ENCODE measurements at regions of chr16 and their contacts with region 1.

Region 1: GRCh38 chr16:85610508-85611332 is 2.4 kb upstream of the GSE1 start:
- DNase-seq: peak; percentile 93
- ATAC-seq: peak; percentile 62
- H3K4me3 Mint-ChIP-seq: peak overlapping the region; percentile 69
- H3K27ac Mint-ChIP-seq: peak overlapping the region; percentile 53
- H3K4me1 Mint-ChIP-seq: peaks cover 58% of the 10 kb centered on the region
- H3K27me3 Mint-ChIP-seq: no peaks in the 10 kb centered on the region

Region 2: GRCh38 chr16:85420501-85421337 is 190.0 kb before region 1 on chr16:
- CTCF ChIA-PET with region 1: interaction called, 79 read pairs
- POLR2A ChIA-PET with region 1: no interaction called
- DNase-seq: peak; percentile 79
- ATAC-seq: peak; percentile 81
- H3K4me3 Mint-ChIP-seq: no peak overlapping the region
- H3K27ac Mint-ChIP-seq: no peak overlapping the region
- H3K4me1 Mint-ChIP-seq: peaks cover 9% of the 10 kb centered on the region
- H3K27me3 Mint-ChIP-seq: no peaks in the 10 kb centered on the region

Region 3: DNA sequence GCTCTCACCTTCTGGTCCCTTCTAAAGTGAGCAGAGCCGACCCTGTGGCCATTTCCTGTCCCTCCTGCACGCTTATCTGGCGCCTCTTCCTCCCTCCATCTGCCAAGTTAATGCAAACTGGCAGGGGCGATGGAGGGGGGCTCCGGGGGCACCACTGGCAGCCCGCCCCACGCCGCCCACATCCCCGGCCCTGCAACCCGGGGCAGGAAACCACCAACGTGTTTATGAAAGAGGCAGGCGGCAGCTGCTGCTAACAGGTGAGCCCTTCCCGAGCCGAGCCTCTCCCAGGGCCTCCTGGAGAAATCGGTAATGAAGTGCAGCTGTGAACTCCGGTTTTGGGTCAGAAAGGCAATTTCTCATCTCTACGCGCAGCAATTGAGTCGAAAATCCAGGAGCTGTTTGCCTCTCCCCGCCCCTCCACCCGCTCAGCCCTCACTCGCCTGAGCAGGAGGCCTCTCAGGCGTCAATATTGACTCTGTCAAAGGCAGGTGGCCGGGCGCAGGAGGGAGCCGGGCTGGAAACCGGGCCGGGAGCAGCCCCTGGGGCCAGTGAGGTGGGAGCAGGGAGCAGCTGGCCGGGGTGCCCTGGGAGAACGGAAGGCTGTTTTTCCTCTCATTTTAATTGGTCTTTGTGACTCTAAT is 162.0 kb before region 1 on chr16:
- CTCF ChIA-PET with region 1: interaction called, 16 read pairs
- POLR2A ChIA-PET with region 1: no interaction called
- DNase-seq: peak; percentile 65
- ATAC-seq: peak; percentile 67
- H3K4me3 Mint-ChIP-seq: peak overlapping the region; percentile 10
- H3K27ac Mint-ChIP-seq: peak overlapping the region; percentile 58
- H3K4me1 Mint-ChIP-seq: peaks cover 40% of the 10 kb centered on the region
- H3K27me3 Mint-ChIP-seq: no peaks in the 10 kb centered on the region

Region 4: GRCh38 chr16:85491058-85491771 is 119.5 kb before region 1 on chr16:
- CTCF ChIA-PET with region 1: interaction called, 36 read pairs
- POLR2A ChIA-PET with region 1: no interaction called
- DNase-seq: peak; percentile 52
- ATAC-seq: no peak
- H3K4me3 Mint-ChIP-seq: no peak overlapping the region
- H3K27ac Mint-ChIP-seq: peak overlapping the region; percentile 25
- H3K4me1 Mint-ChIP-seq: peaks cover 19% of the 10 kb centered on the region
- H3K27me3 Mint-ChIP-seq: peaks cover 3% of the 10 kb centered on the region

Region 5: GRCh38 chr16:85554112-85554813 is 56.5 kb before region 1 on chr16:
- CTCF ChIA-PET with region 1: interaction called, 69 read pairs
- POLR2A ChIA-PET with region 1: interaction called, 34 read pairs
- DNase-seq: peak; percentile 93
- ATAC-seq: peak; percentile 57
- H3K4me3 Mint-ChIP-seq: peak overlapping the region; percentile 83
- H3K27ac Mint-ChIP-seq: peak overlapping the region; percentile 93
- H3K4me1 Mint-ChIP-seq: peaks cover 42% of the 10 kb centered on the region
- H3K27me3 Mint-ChIP-seq: no peaks in the 10 kb centered on the region

Region 6: GRCh38 chr16:85699628-85700027 is 88.9 kb after region 1 on chr16:
- CTCF ChIA-PET with region 1: no interaction called
- POLR2A ChIA-PET with region 1: no interaction called
- DNase-seq: no peak
- ATAC-seq: no peak
- H3K4me3 Mint-ChIP-seq: no peak overlapping the region
- H3K27ac Mint-ChIP-seq: no peak overlapping the region
- H3K4me1 Mint-ChIP-seq: no peaks in the 10 kb centered on the region
- H3K27me3 Mint-ChIP-seq: peaks cover 8% of the 10 kb centered on the region